ENCODE measurements at regions of chr5 and their contacts with region 1.

Region 1: GRCh38 chr5:173907686-173908371 is 19.7 kb downstream of the CPEB4 start:
- DNase-seq: no peak
- ATAC-seq: peak; percentile 17
- H3K4me3 ChIP-seq: no peak overlapping the region
- H3K27ac ChIP-seq: no peak overlapping the region; the same call in 2 of the 3 replicates
- H3K4me1 ChIP-seq: peaks cover 0 to 18% of the 10 kb centered on the region in 2 experiments; a peak in 2 of 5 replicates
- H3K27me3 ChIP-seq: no peaks in the 10 kb centered on the region
- CTCF ChIP-seq: no peak
- EP300 ChIP-seq: no peak
- POLR2A ChIP-seq: no peak
- RAD21 ChIP-seq: no peak

Region 2: DNA sequence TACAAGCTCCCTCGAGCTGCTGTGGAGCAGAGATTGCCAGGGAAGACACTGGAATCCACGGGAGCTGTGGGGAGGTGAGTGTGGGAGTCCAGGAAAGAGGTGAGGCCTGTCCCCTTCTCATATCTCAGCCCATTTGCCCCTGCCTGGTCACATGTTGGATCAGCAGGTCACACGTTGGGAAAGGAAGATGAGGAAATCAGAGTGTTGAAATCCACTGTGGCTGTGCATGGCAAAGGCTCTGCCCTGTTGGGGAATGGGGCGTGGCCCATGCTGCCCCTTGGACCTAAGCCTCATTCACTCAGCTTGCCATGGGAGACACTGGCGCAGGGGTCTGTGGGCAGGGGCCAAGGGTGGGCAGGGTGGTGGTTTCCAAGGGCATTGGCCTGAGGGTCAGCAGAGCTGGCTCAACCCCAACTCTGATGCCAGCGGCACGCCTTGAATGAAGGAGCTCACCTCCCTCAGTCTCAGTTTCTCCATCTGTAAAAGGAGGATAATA is 105.1 kb before region 1 on chr5:
- CTCF ChIA-PET with region 1: no interaction called
- POLR2A ChIA-PET with region 1: no interaction called
- in situ Hi-C with region 1: no loop called
- intact Hi-C with region 1: no loop called
- DNase-seq: no peak
- ATAC-seq: no peak; the same call in 2 of the 3 replicates
- H3K4me3 ChIP-seq: no peak overlapping the region
- H3K27ac ChIP-seq: no peak overlapping the region
- H3K4me1 ChIP-seq: peaks cover 5 to 11% of the 10 kb centered on the region in 2 experiments; a peak in 4 of 5 replicates
- H3K27me3 ChIP-seq: no peaks in the 10 kb centered on the region
- CTCF ChIP-seq: no peak
- EP300 ChIP-seq: no peak
- POLR2A ChIP-seq: no peak
- RAD21 ChIP-seq: no peak

Region 3: GRCh38 chr5:173895401-173896165 is 12.2 kb before region 1 on chr5:
- CTCF ChIA-PET with region 1: interaction called, 3 read pairs
- POLR2A ChIA-PET with region 1: interaction called, 12 read pairs
- in situ Hi-C with region 1: no loop called
- intact Hi-C with region 1: no loop called
- DNase-seq: no peak
- ATAC-seq: no peak
- H3K4me3 ChIP-seq: peak overlapping the region; percentile 17
- H3K27ac ChIP-seq: peak overlapping the region; percentile 66; the same call in 2 of the 3 replicates
- H3K4me1 ChIP-seq: peaks cover 0 to 6% of the 10 kb centered on the region in 2 experiments; a peak in 3 of 5 replicates
- H3K27me3 ChIP-seq: no peaks in the 10 kb centered on the region
- CTCF ChIP-seq: no peak
- EP300 ChIP-seq: no peak
- POLR2A ChIP-seq: no peak
- RAD21 ChIP-seq: no peak

Region 4: GRCh38 chr5:173917788-173918786 is 10.3 kb after region 1 on chr5:
- CTCF ChIA-PET with region 1: no interaction called
- POLR2A ChIA-PET with region 1: interaction called, 10 read pairs
- in situ Hi-C with region 1: no loop called
- intact Hi-C with region 1: no loop called
- DNase-seq: peak; percentile 52 to 85 (median 66)
- ATAC-seq: peak; percentile 90
- H3K4me3 ChIP-seq: peak overlapping the region; percentile 44
- H3K27ac ChIP-seq: peak overlapping the region; percentile 94
- H3K4me1 ChIP-seq: peaks cover 0 to 28% of the 10 kb centered on the region in 2 experiments; a peak in 3 of 5 replicates
- H3K27me3 ChIP-seq: no peaks in the 10 kb centered on the region
- CTCF ChIP-seq: peak in 1 of 3 experiments; percentile 12; a peak in 1 of 6 replicates
- EP300 ChIP-seq: no peak
- POLR2A ChIP-seq: peak; percentile 84
- RAD21 ChIP-seq: peak in 1 of 2 experiments; percentile 24; a peak in 1 of 4 replicates

Region 5: GRCh38 chr5:173989432-173990082 is 81.7 kb after region 1 on chr5:
- CTCF ChIA-PET with region 1: no interaction called
- POLR2A ChIA-PET with region 1: no interaction called
- in situ Hi-C with region 1: no loop called
- intact Hi-C with region 1: no loop called
- DNase-seq: no peak
- ATAC-seq: no peak
- H3K4me3 ChIP-seq: no peak overlapping the region
- H3K27ac ChIP-seq: no peak overlapping the region
- H3K4me1 ChIP-seq: peaks cover 0 to 7% of the 10 kb centered on the region in 2 experiments; a peak in 2 of 5 replicates
- H3K27me3 ChIP-seq: peaks cover 0 to 7% of the 10 kb centered on the region in 2 experiments; a peak in 1 of 5 replicates
- CTCF ChIP-seq: no peak
- EP300 ChIP-seq: no peak
- POLR2A ChIP-seq: no peak
- RAD21 ChIP-seq: no peak

Measured in K562 (cell line).